PC-9 (cell line): ENCODE measurements at regions of chr20 and their contacts with region 1.

Region 1: DNA sequence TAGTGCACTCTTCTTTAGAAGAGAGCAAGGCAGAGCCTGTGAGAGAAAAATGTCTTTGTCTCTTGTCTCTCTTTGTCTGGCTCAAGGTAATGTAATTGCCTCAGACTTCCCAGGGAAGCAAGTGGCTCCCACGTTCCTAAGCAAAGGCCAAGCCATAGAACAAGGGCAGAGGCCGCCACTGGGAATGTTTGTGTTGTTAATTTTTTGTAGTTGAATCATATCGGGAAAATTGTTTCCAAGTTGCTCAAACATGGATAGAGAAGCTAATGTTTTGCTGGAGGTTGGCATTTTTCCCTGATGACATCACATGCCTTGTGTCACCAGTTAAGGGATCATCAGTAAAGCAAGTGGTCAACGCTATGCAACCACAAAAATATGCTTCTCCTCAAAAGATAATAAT is 211.5 kb upstream of the FOXA2 start:
- DNase-seq: peak; percentile 74 to 92
- H3K4me3 ChIP-seq: no peak overlapping the region
- H3K27ac ChIP-seq: peak overlapping the region; percentile 93
- H3K4me1 ChIP-seq: peaks cover 58% of the 10 kb centered on the region
- H3K27me3 ChIP-seq: no peaks in the 10 kb centered on the region
- CTCF ChIP-seq: no peak

Region 2: DNA sequence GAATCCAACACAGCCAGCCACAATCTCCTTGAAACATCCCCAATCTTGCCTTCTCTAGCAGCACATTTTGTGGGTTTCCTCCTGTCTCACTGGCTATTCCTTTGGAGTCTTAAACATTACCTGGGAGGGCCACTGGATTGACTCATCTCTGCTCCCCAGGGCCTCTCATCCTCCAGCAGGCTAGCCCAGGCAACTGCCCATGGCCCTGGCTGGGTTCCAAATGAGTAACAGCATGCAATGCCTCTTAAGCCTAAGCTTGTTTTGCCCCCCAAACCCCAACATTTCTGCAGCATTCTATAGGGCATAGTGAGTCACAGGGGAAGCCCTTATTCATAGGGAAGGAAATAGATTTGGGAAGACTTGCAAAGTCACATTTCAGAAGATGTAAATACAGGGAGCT is 416.4 kb before region 1 on chr20:
- CTCF ChIA-PET with region 1: no interaction called
- POLR2A ChIA-PET with region 1: no interaction called
- intact Hi-C with region 1: loop called (anchors 5 kb)
- DNase-seq: peak; percentile 83 to 85
- H3K4me3 ChIP-seq: no peak overlapping the region
- H3K27ac ChIP-seq: peak overlapping the region; percentile 69
- H3K4me1 ChIP-seq: peaks cover 62% of the 10 kb centered on the region
- H3K27me3 ChIP-seq: no peaks in the 10 kb centered on the region
- CTCF ChIP-seq: no peak

Region 3: GRCh38 chr20:22511943-22512910 is 283.6 kb before region 1 on chr20:
- CTCF ChIA-PET with region 1: no interaction called
- POLR2A ChIA-PET with region 1: no interaction called
- intact Hi-C with region 1: no loop called
- DNase-seq: peak in 1 of 2 experiments; percentile 61
- H3K4me3 ChIP-seq: no peak overlapping the region
- H3K27ac ChIP-seq: peak overlapping the region; percentile 18
- H3K4me1 ChIP-seq: peaks cover 24% of the 10 kb centered on the region
- H3K27me3 ChIP-seq: no peaks in the 10 kb centered on the region
- CTCF ChIP-seq: no peak

Region 4: GRCh38 chr20:22716821-22717351 is 79.0 kb before region 1 on chr20:
- CTCF ChIA-PET with region 1: interaction called, 3 read pairs
- POLR2A ChIA-PET with region 1: no interaction called
- intact Hi-C with region 1: loop called (anchors 2 kb)
- DNase-seq: peak; percentile 57 to 81
- H3K4me3 ChIP-seq: no peak overlapping the region; the same call in 1 of the 2 replicates
- H3K27ac ChIP-seq: peak overlapping the region; percentile 74
- H3K4me1 ChIP-seq: peaks cover 39% of the 10 kb centered on the region
- H3K27me3 ChIP-seq: no peaks in the 10 kb centered on the region
- CTCF ChIP-seq: no peak

Region 5: DNA sequence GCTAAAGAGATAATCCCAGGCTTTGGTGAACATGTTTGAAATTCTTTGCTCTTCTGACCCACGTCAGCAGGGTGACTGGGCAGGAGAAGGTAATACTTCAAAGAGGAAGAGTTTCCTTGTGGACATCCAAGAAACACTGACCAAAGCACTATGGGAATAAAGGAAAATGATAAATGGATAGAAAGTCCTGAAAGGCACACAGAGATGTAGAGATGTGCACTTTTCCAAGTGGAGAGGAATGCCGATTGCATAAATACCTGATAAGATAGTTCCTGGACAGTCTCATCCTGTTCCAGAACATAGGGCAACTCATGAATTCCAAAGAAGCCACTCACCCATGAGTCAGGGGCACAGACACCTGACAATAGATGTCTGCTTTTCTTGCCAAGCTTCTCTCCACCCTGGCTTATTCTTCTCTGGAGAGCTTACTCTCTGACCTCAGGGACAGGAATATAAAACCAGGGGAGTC is 20.2 kb before region 1 on chr20:
- CTCF ChIA-PET with region 1: interaction called, 3 read pairs
- POLR2A ChIA-PET with region 1: interaction called, 8 read pairs
- intact Hi-C with region 1: loop called (anchors 1 kb)
- DNase-seq: peak; percentile 69 to 87
- H3K4me3 ChIP-seq: no peak overlapping the region
- H3K27ac ChIP-seq: peak overlapping the region; percentile 81
- H3K4me1 ChIP-seq: peaks cover 42% of the 10 kb centered on the region
- H3K27me3 ChIP-seq: no peaks in the 10 kb centered on the region
- CTCF ChIP-seq: no peak

Region 6: GRCh38 chr20:22921595-22922421 is 125.9 kb after region 1 on chr20:
- CTCF ChIA-PET with region 1: no interaction called
- POLR2A ChIA-PET with region 1: no interaction called
- intact Hi-C with region 1: loop called (anchors 5 kb)
- DNase-seq: peak; percentile 43 to 95
- H3K4me3 ChIP-seq: no peak overlapping the region
- H3K27ac ChIP-seq: peak overlapping the region; percentile 55
- H3K4me1 ChIP-seq: peaks cover 28% of the 10 kb centered on the region
- H3K27me3 ChIP-seq: peaks cover 56% of the 10 kb centered on the region
- CTCF ChIP-seq: no peak

Region 7: GRCh38 chr20:24503352-24503937 is 1707.6 kb after region 1 on chr20:
- CTCF ChIA-PET with region 1: interaction called, 13 read pairs
- POLR2A ChIA-PET with region 1: no interaction called
- intact Hi-C with region 1: no loop called
- DNase-seq: no peak
- H3K4me3 ChIP-seq: no peak overlapping the region
- H3K27ac ChIP-seq: no peak overlapping the region
- H3K4me1 ChIP-seq: no peaks in the 10 kb centered on the region
- H3K27me3 ChIP-seq: no peaks in the 10 kb centered on the region
- CTCF ChIP-seq: no peak